Heart left ventricle (tissue), 16 donors: ENCODE measurements at regions of chr11 and their contacts with region 1.

Region 1: DNA sequence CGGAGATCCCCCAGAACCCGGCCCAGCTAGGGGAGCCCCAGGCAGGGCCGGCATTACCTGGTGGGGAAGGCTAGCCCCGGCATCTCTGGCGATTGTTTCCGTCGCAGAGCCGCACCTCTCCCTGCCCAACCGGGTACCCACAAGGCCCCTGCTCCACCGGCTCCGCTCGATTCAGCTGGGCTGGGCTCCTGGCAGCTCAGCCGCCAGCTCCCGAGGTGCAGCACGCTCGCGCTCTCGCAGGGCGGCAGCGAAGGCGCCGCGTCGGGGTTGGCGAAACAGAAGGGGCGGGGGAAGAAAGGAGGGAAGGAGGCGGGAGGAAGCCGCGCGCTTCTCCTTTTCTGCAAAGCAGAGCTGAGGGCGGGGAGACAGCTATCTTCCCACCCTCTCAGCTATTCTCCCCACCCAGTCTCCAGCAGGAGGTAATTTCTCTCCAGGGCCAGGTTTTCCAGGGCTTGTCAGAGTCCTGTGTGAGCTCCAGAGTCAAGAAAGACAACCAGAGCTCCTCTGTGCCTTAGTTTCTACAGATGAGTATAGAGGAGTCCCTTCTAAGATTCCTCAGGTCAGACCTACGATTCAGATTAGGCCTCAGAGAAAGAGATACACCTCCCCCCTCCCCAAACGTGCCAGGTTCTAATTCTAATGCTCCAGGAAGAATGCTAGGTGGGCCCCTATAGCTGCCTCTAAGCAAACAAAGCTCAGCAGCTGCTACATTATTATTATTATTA is 62.0 kb downstream of the PAK1 start:
- DNase-seq: peak; percentile 79 to 93 (median 86)
- ATAC-seq: peak; percentile 76 to 96 (median 94)
- H3K4me3 ChIP-seq: peak overlapping the region; percentile 31 to 75 (median 53)
- H3K27ac ChIP-seq: peak overlapping the region in 11 of 12 donors; percentile 12 to 83 (median 48)
- H3K4me1 ChIP-seq: peaks cover 0 to 44% (median 6%) of the 10 kb centered on the region in 12 donors
- H3K27me3 ChIP-seq: no peaks in the 10 kb centered on the region
- CTCF ChIP-seq: peak in 1 of 12 donors; percentile 22
- POLR2A ChIP-seq: peak in 1 of 2 donors; percentile 27

Region 2: DNA sequence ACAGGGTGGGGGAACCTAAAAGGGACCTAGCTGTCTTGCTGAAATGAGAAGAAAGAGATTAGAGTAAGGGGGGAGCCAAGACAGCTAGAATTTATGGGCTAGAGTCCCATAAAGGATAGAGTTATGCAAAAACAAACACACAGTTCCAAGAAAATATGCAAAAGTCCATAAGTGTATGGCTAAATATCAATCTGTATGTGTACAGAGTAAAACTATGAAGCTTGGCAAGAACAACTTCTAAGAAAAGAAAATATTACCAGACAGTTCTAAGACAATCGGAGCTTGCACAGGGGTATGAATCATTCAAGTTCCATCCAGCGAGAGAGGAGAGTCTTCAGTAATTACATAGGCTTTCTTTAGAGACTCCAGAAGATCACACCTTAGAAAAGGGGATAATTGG is 152.2 kb before region 1 on chr11:
- intact Hi-C with region 1: no loop called
- DNase-seq: no peak
- ATAC-seq: no peak
- H3K4me3 ChIP-seq: no peak overlapping the region
- H3K27ac ChIP-seq: no peak overlapping the region
- H3K4me1 ChIP-seq: no peaks in the 10 kb centered on the region
- H3K27me3 ChIP-seq: no peaks in the 10 kb centered on the region
- CTCF ChIP-seq: no peak
- POLR2A ChIP-seq: no peak

Region 3: DNA sequence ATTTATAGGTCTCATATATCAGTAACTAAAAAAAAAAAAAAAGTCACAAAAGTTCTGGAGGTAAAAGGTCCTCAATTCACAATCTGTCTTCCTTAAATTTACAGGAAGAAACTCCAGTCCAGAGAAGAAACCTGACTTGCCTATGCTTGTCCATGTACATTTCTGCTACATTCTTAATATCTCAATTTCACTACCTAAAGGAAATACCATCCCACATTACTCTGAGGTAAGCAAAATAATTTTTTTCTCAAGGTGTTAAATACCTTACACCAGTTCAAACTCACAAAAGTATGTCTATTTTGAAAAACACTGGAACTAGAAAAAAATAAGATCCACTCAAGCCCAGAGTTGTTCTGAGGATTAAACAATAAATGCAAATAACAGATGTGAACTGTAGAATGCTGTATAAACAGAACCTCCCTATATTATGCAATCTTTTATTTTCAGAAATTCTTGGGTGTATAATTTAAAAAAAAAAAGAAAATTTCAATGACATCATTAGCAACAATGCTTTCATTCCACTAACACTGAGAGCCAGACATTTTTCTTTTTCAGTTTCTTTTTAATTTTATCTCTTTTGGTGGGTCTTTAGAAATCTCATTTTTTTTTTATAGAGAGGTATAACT is 60.5 kb before region 1 on chr11:
- intact Hi-C with region 1: loop called in 1 of 10 experiments (anchors 10 kb)
- DNase-seq: no peak
- ATAC-seq: no peak
- H3K4me3 ChIP-seq: no peak overlapping the region
- H3K27ac ChIP-seq: no peak overlapping the region
- H3K4me1 ChIP-seq: peaks cover 0 to 24% (median 16%) of the 10 kb centered on the region in 12 donors
- H3K27me3 ChIP-seq: no peaks in the 10 kb centered on the region
- CTCF ChIP-seq: no peak
- POLR2A ChIP-seq: no peak

Region 4: DNA sequence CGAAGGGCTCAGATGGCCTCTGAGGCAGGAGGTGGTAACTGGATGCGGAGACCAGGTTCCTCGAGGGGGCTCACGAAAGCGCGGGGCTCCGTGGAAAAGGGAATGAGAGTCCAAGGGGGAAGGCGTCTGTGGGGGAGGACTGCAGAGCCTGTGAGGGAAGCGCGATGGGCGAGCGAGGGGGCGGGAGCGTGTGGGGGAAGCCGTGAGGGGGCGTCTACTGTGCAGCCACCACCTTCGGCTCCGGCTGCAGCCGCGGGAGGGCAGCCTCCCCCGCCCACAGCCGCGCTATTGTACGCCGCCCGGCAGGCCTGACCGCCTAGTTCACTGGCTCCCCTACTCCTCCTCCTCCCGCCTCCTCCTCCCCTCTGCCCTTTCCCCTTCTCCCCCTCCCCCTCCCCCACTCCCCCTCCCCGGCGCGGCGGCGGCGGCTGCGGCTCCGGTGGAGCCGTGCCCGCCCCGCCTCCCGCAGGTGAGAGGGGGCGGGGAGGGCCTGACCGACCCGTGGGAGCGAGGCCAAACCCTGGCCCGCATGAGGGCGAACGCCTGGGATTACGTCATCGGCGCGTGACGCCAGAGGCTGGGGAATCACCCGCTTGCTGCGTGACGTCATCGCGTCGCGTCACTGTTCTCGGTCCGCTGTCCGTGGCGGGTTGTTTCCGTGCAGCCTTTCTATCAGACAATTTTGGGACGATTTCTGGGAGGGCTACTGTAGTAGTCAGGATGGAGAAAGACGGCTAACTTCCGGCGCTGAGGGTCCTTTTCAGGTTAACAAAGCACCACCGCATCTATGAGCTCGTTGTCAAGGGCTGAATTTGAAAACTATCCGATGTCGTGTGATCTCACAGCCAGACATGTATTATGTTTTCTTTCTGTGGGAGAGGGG is 62.2 kb after region 1 on chr11 and contains the start of gene PAK1:
- intact Hi-C with region 1: loop called in 1 of 10 experiments (anchors 10 kb)
- DNase-seq: peak; percentile 73 to 87 (median 79)
- ATAC-seq: peak in 3 of 4 donors; percentile 85 to 88 (median 87)
- H3K4me3 ChIP-seq: peak within 1 kb of the TSS; percentile 36 to 80 (median 63)
- H3K27ac ChIP-seq: peak within 1 kb of the TSS in 5 of 12 donors; percentile 24 to 52 (median 33)
- H3K4me1 ChIP-seq: peaks cover 0 to 17% (median 2%) of the 10 kb centered on the region in 12 donors
- H3K27me3 ChIP-seq: peaks cover 0 to 13% (median 0%) of the 10 kb centered on the region in 9 donors
- CTCF ChIP-seq: peak in 6 of 12 donors; percentile 7 to 44 (median 24)
- POLR2A ChIP-seq: no peak
- total RNA-seq, gene PAK1: 2.9 to 25.4 (median 11.9) TPM

Region 5: DNA sequence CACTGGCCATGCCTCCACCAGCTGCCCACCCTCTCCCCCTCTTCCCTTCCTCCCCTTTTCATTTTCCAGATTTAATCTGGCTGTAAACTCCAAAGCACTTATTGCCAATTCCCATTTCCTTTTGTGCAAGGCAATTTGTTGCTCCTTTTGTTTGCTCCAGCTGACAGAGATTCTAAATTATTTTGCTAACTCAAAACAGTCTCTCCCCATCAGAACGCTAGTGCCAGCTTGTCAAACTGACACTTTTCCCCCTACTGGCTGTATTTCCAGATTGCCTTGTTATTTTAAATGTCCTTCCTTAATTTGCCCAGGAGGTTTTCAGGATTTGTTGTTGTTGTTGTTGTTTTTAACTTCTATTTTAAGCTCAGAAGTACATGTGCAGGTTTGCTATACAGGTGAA is 119.0 kb after region 1 on chr11:
- intact Hi-C with region 1: loop called in 1 of 10 experiments (anchors 10 kb)
- DNase-seq: no peak
- ATAC-seq: no peak
- H3K4me3 ChIP-seq: no peak overlapping the region
- H3K27ac ChIP-seq: no peak overlapping the region
- H3K4me1 ChIP-seq: no peaks in the 10 kb centered on the region
- H3K27me3 ChIP-seq: no peaks in the 10 kb centered on the region
- CTCF ChIP-seq: no peak
- POLR2A ChIP-seq: no peak